ENCODE measurements at regions of chr10 and their contacts with region 1.

Region 1: DNA sequence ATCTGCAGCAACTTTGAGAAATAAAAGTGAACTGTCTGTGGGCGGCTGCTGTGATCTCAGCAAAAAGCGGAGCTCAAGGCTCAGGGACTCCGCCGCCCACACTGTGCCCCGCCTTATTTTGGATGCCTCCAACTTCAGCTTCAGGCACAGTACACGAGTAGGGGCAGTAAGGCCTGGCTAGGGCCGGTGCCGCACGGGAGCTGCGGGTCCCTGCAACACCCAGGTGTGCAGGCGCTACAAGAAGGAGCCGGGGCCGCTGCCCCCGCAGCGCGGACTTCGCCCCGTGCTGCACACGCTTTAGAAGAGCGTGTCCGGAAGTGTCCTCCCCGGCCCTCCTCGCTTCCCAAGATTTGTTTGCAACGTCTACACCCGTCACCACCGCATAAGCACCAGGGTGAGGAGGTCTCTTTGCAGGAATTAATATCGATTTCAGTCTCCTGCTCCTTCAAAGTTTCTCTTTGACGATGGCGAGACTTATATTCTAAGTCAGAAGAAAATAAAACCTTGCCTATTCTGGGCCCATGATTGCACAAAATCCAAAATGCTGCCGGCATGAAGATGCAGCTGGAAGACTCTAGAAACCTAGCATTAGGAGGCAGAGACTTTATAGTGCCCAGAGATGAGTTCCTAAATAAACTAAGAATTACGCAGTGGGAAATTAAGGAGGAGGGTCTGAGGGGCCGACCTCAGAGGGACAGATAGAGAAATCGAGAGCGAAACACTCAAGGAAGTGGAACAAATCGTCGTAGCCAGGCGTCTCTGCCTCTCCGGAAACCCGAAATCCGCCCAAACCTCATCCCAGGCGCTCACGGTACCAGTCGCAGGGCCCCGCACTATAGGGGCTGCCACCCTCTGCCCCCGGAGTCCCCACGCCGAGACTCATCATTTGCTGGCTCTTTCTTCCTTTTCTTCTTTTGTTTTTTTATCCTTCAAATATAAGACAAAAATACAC is 6.4 kb downstream of the VAX1 start:
- DNase-seq: no peak
- H3K4me3 Mint-ChIP-seq: no peak overlapping the region
- H3K27ac Mint-ChIP-seq: peak overlapping the region; percentile 53
- H3K4me1 Mint-ChIP-seq: no peaks in the 10 kb centered on the region
- H3K27me3 Mint-ChIP-seq: peaks cover 76% of the 10 kb centered on the region

Region 2: DNA sequence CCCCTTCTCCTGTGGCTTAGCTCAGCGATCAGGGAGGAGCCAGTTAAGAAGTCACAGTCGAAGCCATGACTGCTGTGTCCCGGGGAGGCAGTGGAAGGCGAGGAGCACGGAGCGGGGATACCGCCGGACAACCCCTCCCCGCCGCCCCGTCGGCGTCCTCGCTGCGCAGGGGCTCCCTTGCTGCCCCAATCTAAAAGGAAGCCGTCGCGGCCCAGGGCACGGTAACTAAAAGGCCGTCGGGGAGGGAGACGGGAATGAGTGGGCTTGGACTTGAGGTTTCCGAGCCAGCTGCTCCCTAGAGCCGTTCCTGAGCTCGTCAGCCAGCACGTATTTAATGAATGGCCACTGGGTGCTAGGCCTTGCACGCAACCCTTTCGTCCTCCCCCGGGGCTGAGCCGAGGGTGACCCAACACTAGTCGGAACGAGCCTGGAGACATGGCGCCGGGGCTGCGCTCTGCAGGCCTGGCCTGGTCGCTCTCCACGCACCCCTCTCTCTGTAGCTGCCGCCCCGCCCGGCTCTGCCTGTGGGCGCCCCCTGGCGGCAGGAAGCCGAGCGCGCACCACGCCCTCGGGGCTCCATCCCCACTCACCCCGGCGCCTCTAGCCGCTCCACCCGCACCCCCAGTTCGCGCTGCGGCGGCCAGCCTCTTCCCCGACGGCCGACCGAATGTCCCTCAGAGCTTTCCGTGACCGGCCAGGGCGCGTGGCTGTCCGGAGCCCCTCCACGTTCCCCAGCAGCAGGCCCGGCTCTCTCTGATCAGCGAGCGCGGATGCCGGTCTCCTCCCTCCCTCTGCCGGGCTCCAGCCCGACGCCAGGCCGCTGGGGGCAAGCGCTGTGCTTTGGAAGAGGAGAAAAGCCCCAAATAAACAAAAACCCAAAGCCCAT is 36.4 kb after region 1 on chr10:
- intact Hi-C with region 1: loop called (anchors 1 kb)
- DNase-seq: peak; percentile 39
- H3K4me3 Mint-ChIP-seq: no peak overlapping the region
- H3K27ac Mint-ChIP-seq: no peak overlapping the region
- H3K4me1 Mint-ChIP-seq: peaks cover 7% of the 10 kb centered on the region
- H3K27me3 Mint-ChIP-seq: peaks cover 73% of the 10 kb centered on the region

Region 3: DNA sequence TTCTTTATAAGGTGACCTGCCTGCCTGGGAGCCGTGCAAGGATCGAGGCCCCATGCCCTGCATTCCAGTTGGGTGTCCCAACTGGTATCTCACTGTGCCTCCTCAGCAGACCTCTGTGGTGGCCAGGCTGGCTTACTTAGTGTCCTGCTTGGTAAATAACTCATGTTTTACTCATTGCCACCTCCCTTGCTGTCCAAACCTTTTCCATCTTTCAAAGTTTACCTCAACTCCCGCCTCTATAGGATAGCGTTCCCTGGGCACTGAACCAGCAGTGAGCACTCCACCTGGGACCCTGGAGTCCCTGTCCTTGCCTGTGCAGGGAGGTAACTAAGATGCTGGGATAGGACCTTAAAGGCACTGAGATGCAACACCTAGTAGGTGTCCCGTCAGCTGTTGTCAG is 142.9 kb after region 1 on chr10:
- intact Hi-C with region 1: no loop called
- DNase-seq: no peak
- H3K4me3 Mint-ChIP-seq: no peak overlapping the region
- H3K27ac Mint-ChIP-seq: no peak overlapping the region
- H3K4me1 Mint-ChIP-seq: no peaks in the 10 kb centered on the region
- H3K27me3 Mint-ChIP-seq: no peaks in the 10 kb centered on the region

Region 4: DNA sequence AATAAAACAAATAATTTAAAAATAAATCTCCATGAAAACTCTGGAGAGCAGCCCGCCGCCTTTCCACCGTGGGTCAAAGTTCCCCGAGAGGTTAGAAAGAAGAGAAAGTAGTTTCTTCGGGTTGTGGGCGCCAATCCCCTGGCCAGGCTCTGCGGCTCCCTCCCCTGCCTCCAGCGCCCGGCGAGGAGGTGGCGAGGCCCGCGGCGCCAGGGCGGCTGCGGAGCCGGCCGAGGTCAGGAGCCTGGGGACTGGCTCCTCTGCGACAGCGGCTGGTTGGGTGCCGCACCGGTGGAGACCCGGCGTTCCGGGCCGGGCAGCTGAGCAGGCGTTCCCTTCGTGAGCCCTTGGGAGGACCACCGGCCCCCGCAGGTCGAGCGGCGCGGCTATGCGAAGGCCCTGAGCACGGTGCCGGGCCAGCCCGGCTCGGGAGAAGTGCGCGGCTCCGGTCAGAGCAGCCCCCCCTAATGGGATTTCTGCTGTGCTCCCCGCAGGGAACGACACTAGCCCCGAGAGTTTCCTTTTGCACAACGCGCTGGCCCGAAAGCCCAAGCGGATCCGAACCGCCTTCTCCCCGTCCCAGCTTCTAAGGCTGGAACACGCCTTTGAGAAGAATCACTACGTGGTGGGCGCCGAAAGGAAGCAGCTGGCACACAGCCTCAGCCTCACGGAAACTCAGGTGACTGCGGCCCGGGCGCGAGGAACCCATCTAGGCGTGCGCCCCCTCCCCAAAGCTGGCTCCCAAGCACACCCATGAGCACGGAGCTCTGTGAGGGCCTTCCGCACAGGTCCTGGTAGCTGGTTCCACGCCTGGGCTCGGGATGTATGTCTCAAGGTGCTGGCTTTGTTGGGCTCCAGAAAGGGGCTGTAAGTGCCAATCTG is 413.7 kb after region 1 on chr10:
- intact Hi-C with region 1: loop called (anchors 2 kb)
- DNase-seq: no peak
- H3K4me3 Mint-ChIP-seq: no peak overlapping the region
- H3K27ac Mint-ChIP-seq: peak overlapping the region; percentile 24
- H3K4me1 Mint-ChIP-seq: peaks cover 6% of the 10 kb centered on the region
- H3K27me3 Mint-ChIP-seq: peaks cover 78% of the 10 kb centered on the region